ENCODE measurements at regions of chr3 and their contacts with region 1.

Region 1: DNA sequence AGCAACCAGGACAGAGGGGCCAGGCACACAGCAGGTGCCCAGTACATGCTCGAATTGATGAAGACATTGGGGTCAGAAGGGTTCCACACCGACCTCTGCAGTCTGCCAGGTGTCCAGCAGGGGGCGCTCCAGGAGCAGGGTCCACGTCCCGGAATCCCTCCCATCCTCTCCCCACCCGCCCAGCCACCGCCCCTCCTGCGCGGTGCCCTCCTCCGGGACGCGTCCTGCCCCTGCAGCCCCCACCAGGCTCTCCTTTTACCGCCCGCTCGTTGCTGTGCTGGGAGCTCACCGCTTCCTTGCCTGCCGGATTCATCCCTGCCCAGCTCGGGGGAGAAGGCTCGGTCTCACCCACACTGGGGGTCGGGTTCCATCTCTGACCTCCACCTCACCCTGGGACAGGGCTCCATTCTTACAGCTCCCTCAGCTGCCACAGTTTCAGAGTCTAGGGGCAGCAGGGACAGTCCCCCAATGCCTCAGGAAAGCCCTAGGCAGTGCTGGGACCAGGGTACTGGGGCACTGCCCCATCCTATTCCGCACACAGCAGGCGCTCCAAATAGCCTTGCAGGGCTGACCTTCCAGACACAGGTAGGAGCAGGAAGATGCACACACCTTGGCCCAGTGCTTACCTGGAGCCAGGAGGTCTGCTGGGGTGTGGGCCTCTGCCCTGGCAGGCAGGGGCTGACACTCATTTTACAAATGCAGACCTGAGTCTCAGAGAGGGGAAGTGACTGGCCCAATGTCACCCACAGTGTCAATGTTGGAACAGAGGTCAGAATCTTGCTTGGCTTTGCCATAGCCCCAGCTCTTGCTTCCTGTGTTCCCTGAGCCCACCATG is 31.0 kb downstream of the GRIP2 start:
- DNase-seq: peak; percentile 94
- H3K4me3 ChIP-seq: peak overlapping the region in 1 of 2 experiments; percentile 27; a peak in 2 of 4 replicates
- H3K27ac ChIP-seq: no peak overlapping the region
- H3K4me1 ChIP-seq: peaks cover 0 to 14% of the 10 kb centered on the region in 2 experiments; a peak in 1 of 4 replicates
- H3K27me3 ChIP-seq: no peaks in the 10 kb centered on the region
- CTCF ChIP-seq: peak; percentile 74
- EP300 ChIP-seq: no peak
- RAD21 ChIP-seq: peak; percentile 82

Region 2: DNA sequence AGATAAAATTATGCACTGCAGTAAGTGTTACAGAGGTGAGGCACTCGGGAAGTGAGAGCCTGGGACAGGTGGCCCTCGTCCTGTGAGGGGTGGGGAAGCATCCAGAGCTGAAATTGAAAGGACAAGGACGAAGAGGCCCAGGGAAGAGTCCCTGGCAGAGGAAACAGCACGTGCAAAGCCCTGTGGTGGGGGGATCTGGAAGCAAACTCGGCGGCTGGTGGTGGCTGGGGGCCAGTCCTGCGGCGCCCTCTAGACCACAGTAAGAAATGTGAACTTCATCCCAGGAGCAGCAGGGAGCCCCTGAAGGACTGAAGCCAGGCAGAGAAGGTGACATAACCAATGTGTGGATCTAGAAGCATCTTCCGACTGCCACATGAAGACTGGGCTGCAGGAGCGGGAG is 11.9 kb before region 1 on chr3:
- CTCF ChIA-PET with region 1: interaction called, 15 read pairs
- POLR2A ChIA-PET with region 1: no interaction called
- DNase-seq: no peak
- H3K4me3 ChIP-seq: no peak overlapping the region
- H3K27ac ChIP-seq: no peak overlapping the region
- H3K4me1 ChIP-seq: no peaks in the 10 kb centered on the region
- H3K27me3 ChIP-seq: no peaks in the 10 kb centered on the region; the same call in 1 of the 2 replicates
- CTCF ChIP-seq: no peak
- EP300 ChIP-seq: no peak
- RAD21 ChIP-seq: no peak

Region 3: GRCh38 chr3:14532691-14533456 is 23.7 kb after region 1 on chr3:
- CTCF ChIA-PET with region 1: interaction called, 53 read pairs
- POLR2A ChIA-PET with region 1: no interaction called
- DNase-seq: peak; percentile 50
- H3K4me3 ChIP-seq: no peak overlapping the region
- H3K27ac ChIP-seq: peak overlapping the region in 1 of 2 experiments; percentile 16; a peak in 1 of 4 replicates
- H3K4me1 ChIP-seq: peaks cover 0 to 34% of the 10 kb centered on the region in 2 experiments; a peak in 1 of 4 replicates
- H3K27me3 ChIP-seq: 0 out of 2 replicates have a peak, but pooled peaks cover 6% of the 10 kb centered on the region
- CTCF ChIP-seq: no peak
- EP300 ChIP-seq: no peak
- RAD21 ChIP-seq: no peak

Region 4: DNA sequence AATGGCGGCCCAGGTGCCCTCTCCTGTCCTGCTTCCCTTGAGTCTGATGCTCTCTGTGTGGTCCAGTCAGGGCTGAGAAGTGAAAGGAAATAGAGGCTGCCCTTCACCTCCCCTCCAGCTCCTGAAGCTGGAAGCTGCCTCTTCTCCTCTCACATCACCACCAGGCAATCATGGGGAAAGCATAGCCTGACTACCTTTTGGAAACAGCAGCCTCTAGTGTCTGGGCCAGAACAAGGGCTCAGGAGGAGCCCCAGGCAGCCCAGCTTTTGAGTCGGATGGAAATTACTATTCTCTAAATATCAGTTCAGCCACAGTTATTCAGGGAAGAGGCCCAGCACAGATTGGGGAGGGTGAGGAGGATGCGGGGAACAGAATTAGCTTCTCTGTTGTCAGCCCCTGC is 99.1 kb after region 1 on chr3:
- CTCF ChIA-PET with region 1: interaction called, 10 read pairs
- POLR2A ChIA-PET with region 1: no interaction called
- DNase-seq: no peak
- H3K4me3 ChIP-seq: no peak overlapping the region
- H3K27ac ChIP-seq: no peak overlapping the region
- H3K4me1 ChIP-seq: no peaks in the 10 kb centered on the region
- H3K27me3 ChIP-seq: peaks cover 11% of the 10 kb centered on the region; the same call in 1 of the 2 replicates
- CTCF ChIP-seq: no peak
- EP300 ChIP-seq: no peak
- RAD21 ChIP-seq: 0 out of 2 replicates have a peak, but pooled peaks have one; percentile 8

Region 5: GRCh38 chr3:14867936-14868570 is 358.9 kb after region 1 on chr3:
- CTCF ChIA-PET with region 1: no interaction called
- POLR2A ChIA-PET with region 1: no interaction called
- DNase-seq: no peak
- H3K4me3 ChIP-seq: no peak overlapping the region
- H3K27ac ChIP-seq: no peak overlapping the region
- H3K4me1 ChIP-seq: peaks cover 0 to 5% of the 10 kb centered on the region in 2 experiments; a peak in 1 of 4 replicates
- H3K27me3 ChIP-seq: no peaks in the 10 kb centered on the region; the same call in 1 of the 2 replicates
- CTCF ChIP-seq: no peak
- EP300 ChIP-seq: no peak
- RAD21 ChIP-seq: no peak